B cell (primary cell): ENCODE measurements at regions of chr12 and their contacts with region 1.

Region 1: GRCh38 chr12:10212201-10213131 is at the start of gene GABARAPL1:
- DNase-seq: peak; percentile 86
- ATAC-seq: peak; percentile 80
- H3K4me3 ChIP-seq: peak within 1 kb of the TSS; percentile 66 to 84 (median 82)
- H3K4me3 Mint-ChIP-seq: peak within 1 kb of the TSS; percentile 95
- H3K27ac ChIP-seq: peak within 1 kb of the TSS; percentile 25 to 28
- H3K27ac Mint-ChIP-seq: peak within 1 kb of the TSS; percentile 86
- H3K4me1 ChIP-seq: peaks cover 13 to 18% of the 10 kb centered on the region in 2 donors
- H3K4me1 Mint-ChIP-seq: peaks cover 19% of the 10 kb centered on the region
- H3K27me3 ChIP-seq: peaks cover 0 to 36% (median 20%) of the 10 kb centered on the region in 4 experiments
- H3K27me3 Mint-ChIP-seq: peaks cover 29% of the 10 kb centered on the region
- CTCF ChIP-seq: no peak
- total RNA-seq, gene GABARAPL1: 11.9 and 12.0 TPM in 2 replicates

Region 2: GRCh38 chr12:10182354-10183061 is 30.0 kb before region 1 on chr12:
- CTCF ChIA-PET with region 1: no interaction called
- POLR2A ChIA-PET with region 1: no interaction called
- intact Hi-C with region 1: no loop called
- DNase-seq: no peak
- ATAC-seq: no peak
- H3K4me3 ChIP-seq: no peak overlapping the region
- H3K4me3 Mint-ChIP-seq: no peak overlapping the region
- H3K27ac ChIP-seq: no peak overlapping the region
- H3K27ac Mint-ChIP-seq: no peak overlapping the region
- H3K4me1 ChIP-seq: peaks cover 0 to 5% of the 10 kb centered on the region in 2 donors
- H3K4me1 Mint-ChIP-seq: peaks cover 6% of the 10 kb centered on the region
- H3K27me3 ChIP-seq: peaks cover 0 to 22% (median 18%) of the 10 kb centered on the region in 4 experiments
- H3K27me3 Mint-ChIP-seq: peaks cover 57% of the 10 kb centered on the region
- CTCF ChIP-seq: no peak

Region 3: DNA sequence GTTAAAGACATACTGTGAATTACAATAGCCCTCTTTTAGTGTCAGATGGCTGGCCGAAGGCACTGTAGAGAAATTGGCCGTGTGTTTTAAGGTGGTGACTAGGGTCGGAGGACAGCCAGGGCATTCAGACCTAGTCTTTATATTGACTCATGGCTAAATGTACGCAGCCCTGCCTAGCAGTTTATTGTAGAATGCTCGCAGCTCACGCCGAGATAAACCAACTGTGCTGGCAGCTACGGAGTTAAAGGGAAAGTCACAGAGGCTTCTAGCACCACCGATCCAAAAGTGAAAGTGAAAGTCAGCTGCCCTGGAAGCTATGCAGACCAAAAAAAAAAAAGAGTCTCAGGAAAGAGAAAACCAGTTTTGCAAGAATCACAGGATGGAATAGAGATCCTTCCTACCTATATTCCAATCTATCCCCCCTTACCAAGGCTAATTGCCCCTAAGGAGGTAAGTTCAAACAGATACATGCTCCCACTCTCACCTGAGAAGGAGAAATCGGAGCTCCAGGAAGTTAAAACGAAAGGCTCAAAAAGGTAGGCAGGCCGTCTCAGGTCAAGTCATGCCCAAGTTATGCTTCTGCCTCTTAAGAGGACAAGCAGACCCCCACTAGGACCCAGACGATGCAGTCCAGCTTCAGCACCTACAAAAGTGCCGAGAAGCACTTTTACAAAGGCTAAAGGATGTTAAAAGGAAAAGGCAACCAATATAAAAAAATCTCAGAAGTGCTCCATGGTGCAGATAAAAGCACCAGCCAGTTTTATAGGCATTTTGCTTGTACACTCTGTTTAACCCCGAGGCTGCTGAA is 152.6 kb after region 1 on chr12:
- CTCF ChIA-PET with region 1: no interaction called
- POLR2A ChIA-PET with region 1: no interaction called
- intact Hi-C with region 1: loop called (anchors 2 kb)
- DNase-seq: peak; percentile 87
- ATAC-seq: peak; percentile 73
- H3K4me3 ChIP-seq: peak overlapping the region; percentile 72 to 98 (median 95)
- H3K4me3 Mint-ChIP-seq: no peak overlapping the region
- H3K27ac ChIP-seq: peak overlapping the region; percentile 91 to 93
- H3K27ac Mint-ChIP-seq: no peak overlapping the region
- H3K4me1 ChIP-seq: peaks cover 32 to 46% of the 10 kb centered on the region in 2 donors
- H3K4me1 Mint-ChIP-seq: peaks cover 2% of the 10 kb centered on the region
- H3K27me3 ChIP-seq: no peaks in the 10 kb centered on the region
- H3K27me3 Mint-ChIP-seq: no peaks in the 10 kb centered on the region
- CTCF ChIP-seq: no peak

Region 4: GRCh38 chr12:11171145-11171968 is 958.9 kb after region 1 on chr12 and contains the start of gene SMIM10L1:
- CTCF ChIA-PET with region 1: no interaction called
- POLR2A ChIA-PET with region 1: no interaction called
- intact Hi-C with region 1: loop called (anchors 10 kb)
- DNase-seq: peak; percentile 93
- ATAC-seq: peak; percentile 95
- H3K4me3 ChIP-seq: peak within 1 kb of the TSS; percentile 43 to 75 (median 61)
- H3K4me3 Mint-ChIP-seq: peak within 1 kb of the TSS; percentile 99
- H3K27ac ChIP-seq: peak within 1 kb of the TSS; percentile 53 to 71
- H3K27ac Mint-ChIP-seq: peak within 1 kb of the TSS; percentile 97
- H3K4me1 ChIP-seq: peaks cover 22 to 25% of the 10 kb centered on the region in 2 donors
- H3K4me1 Mint-ChIP-seq: peaks cover 44% of the 10 kb centered on the region
- H3K27me3 ChIP-seq: no peaks in the 10 kb centered on the region
- H3K27me3 Mint-ChIP-seq: no peaks in the 10 kb centered on the region
- CTCF ChIP-seq: no peak
- total RNA-seq, gene SMIM10L1: 9.6 and 10.1 TPM in 2 replicates